SK-N-SH (cell line): ENCODE measurements at regions of chr3 and their contacts with region 1.

Region 1: DNA sequence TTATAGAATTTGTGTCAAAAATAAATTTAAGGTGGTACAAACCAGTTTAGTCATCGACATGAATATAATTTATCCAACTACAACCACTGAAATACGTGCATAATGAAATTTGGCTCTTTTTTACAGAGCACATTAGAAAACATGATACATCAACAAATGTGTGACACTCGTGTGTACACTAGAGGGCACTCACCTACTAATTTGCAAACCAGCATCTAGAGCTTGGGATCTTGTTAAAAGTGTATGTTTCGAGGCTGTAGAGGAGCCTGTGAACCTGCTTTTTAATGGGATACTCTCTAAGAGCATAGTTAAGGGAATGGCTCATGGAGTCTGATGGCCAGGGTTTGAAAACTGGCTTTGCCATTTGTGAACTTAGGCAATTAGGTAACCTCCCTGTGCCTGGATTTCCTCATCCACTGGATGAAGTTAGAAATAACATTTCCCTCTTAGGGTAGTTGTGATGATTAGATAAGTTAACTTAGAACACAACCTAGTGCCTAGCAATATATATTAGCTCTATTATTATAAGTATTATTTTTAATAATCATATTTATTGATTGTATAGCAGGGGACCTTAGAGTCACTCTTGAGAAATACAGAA is 8.8 kb upstream of the CPOX start:
- DNase-seq: peak; percentile 51
- H3K4me3 ChIP-seq: peak overlapping the region in 1 of 2 experiments; percentile 33; a peak in 1 of 4 replicates
- H3K27ac ChIP-seq: no peak overlapping the region; a peak in 1 of 4 replicates
- H3K4me1 ChIP-seq: no peaks in the 10 kb centered on the region; a peak in 1 of 4 replicates
- H3K27me3 ChIP-seq: no peaks in the 10 kb centered on the region
- CTCF ChIP-seq: peak; percentile 88
- EP300 ChIP-seq: no peak
- RAD21 ChIP-seq: peak; percentile 99

Region 2: GRCh38 chr3:98545940-98546339 is 56.2 kb before region 1 on chr3:
- CTCF ChIA-PET with region 1: no interaction called
- POLR2A ChIA-PET with region 1: no interaction called
- DNase-seq: no peak
- H3K4me3 ChIP-seq: no peak overlapping the region
- H3K27ac ChIP-seq: no peak overlapping the region
- H3K4me1 ChIP-seq: no peaks in the 10 kb centered on the region
- H3K27me3 ChIP-seq: peaks cover 21% of the 10 kb centered on the region
- CTCF ChIP-seq: no peak
- EP300 ChIP-seq: no peak
- RAD21 ChIP-seq: no peak

Region 3: GRCh38 chr3:98612587-98612986 is 10.4 kb after region 1 on chr3:
- CTCF ChIA-PET with region 1: interaction called, 21 read pairs
- POLR2A ChIA-PET with region 1: no interaction called
- DNase-seq: no peak
- H3K4me3 ChIP-seq: no peak overlapping the region
- H3K27ac ChIP-seq: no peak overlapping the region
- H3K4me1 ChIP-seq: peaks cover 0 to 3% of the 10 kb centered on the region in 2 experiments; a peak in 1 of 4 replicates
- H3K27me3 ChIP-seq: no peaks in the 10 kb centered on the region
- CTCF ChIP-seq: no peak; the same call in 1 of the 2 replicates
- EP300 ChIP-seq: no peak
- RAD21 ChIP-seq: no peak

Region 4: GRCh38 chr3:98732286-98733052 is 130.3 kb after region 1 on chr3:
- CTCF ChIA-PET with region 1: interaction called, 18 read pairs
- POLR2A ChIA-PET with region 1: interaction called, 11 read pairs
- DNase-seq: peak; percentile 79
- H3K4me3 ChIP-seq: peak overlapping the region; percentile 84 to 86
- H3K27ac ChIP-seq: peak overlapping the region; percentile 60 to 98
- H3K4me1 ChIP-seq: peaks cover 5 to 28% of the 10 kb centered on the region in 2 experiments; a peak in 3 of 4 replicates
- H3K27me3 ChIP-seq: no peaks in the 10 kb centered on the region
- CTCF ChIP-seq: no peak
- EP300 ChIP-seq: no peak
- RAD21 ChIP-seq: no peak

Region 5: GRCh38 chr3:98778852-98779413 is 176.8 kb after region 1 on chr3:
- CTCF ChIA-PET with region 1: interaction called, 11 read pairs
- POLR2A ChIA-PET with region 1: no interaction called
- DNase-seq: no peak
- H3K4me3 ChIP-seq: no peak overlapping the region
- H3K27ac ChIP-seq: peak overlapping the region; percentile 60 to 84
- H3K4me1 ChIP-seq: peaks cover 0 to 39% of the 10 kb centered on the region in 2 experiments
- H3K27me3 ChIP-seq: no peaks in the 10 kb centered on the region
- CTCF ChIP-seq: no peak
- EP300 ChIP-seq: no peak
- RAD21 ChIP-seq: no peak

Region 6: GRCh38 chr3:98798820-98799219 is 196.6 kb after region 1 on chr3:
- CTCF ChIA-PET with region 1: interaction called, 27 read pairs
- POLR2A ChIA-PET with region 1: no interaction called
- DNase-seq: no peak
- H3K4me3 ChIP-seq: no peak overlapping the region
- H3K27ac ChIP-seq: peak overlapping the region; percentile 40 to 50; a peak in 3 of 4 replicates
- H3K4me1 ChIP-seq: peaks cover 0 to 9% of the 10 kb centered on the region in 2 experiments; a peak in 2 of 4 replicates
- H3K27me3 ChIP-seq: no peaks in the 10 kb centered on the region
- CTCF ChIP-seq: no peak
- EP300 ChIP-seq: no peak
- RAD21 ChIP-seq: peak; percentile 42

Region 7: GRCh38 chr3:98817547-98818041 is 215.4 kb after region 1 on chr3:
- CTCF ChIA-PET with region 1: interaction called, 197 read pairs
- POLR2A ChIA-PET with region 1: no interaction called
- DNase-seq: peak; percentile 39
- H3K4me3 ChIP-seq: no peak overlapping the region
- H3K27ac ChIP-seq: peak overlapping the region; percentile 40 to 59
- H3K4me1 ChIP-seq: peaks cover 10 to 22% of the 10 kb centered on the region in 2 experiments
- H3K27me3 ChIP-seq: no peaks in the 10 kb centered on the region
- CTCF ChIP-seq: peak; percentile 69
- EP300 ChIP-seq: no peak
- RAD21 ChIP-seq: peak; percentile 81